Uterus (tissue), 4 donors: ENCODE measurements at regions of chr3 and their contacts with region 1.

Region 1: GRCh38 chr3:32018757-32019564 is 37.4 kb downstream of the ZNF860 start:
- DNase-seq: no peak
- H3K4me3 ChIP-seq: no peak overlapping the region
- H3K27ac ChIP-seq: no peak overlapping the region
- H3K4me1 ChIP-seq: no peaks in the 10 kb centered on the region
- H3K27me3 ChIP-seq: no peaks in the 10 kb centered on the region
- CTCF ChIP-seq: peak; percentile 62 to 83 (median 77)
- POLR2A ChIP-seq: no peak

Region 2: GRCh38 chr3:32143849-32144757 is 125.1 kb after region 1 on chr3:
- intact Hi-C with region 1: loop called (anchors 5 kb)
- DNase-seq: peak; percentile 30 to 57
- H3K4me3 ChIP-seq: no peak overlapping the region
- H3K27ac ChIP-seq: no peak overlapping the region
- H3K4me1 ChIP-seq: no peaks in the 10 kb centered on the region
- H3K27me3 ChIP-seq: no peaks in the 10 kb centered on the region
- CTCF ChIP-seq: peak; percentile 74 to 82 (median 79)
- POLR2A ChIP-seq: no peak